K562 (cell line): ENCODE measurements at regions of chr11 and their contacts with region 1.

Region 1: GRCh38 chr11:61187505-61188130 is 15.7 kb upstream of the PGA3 start:
- DNase-seq: peak; percentile 73 to 86 (median 80)
- ATAC-seq: peak; percentile 96
- H3K4me3 ChIP-seq: no peak overlapping the region
- H3K27ac ChIP-seq: no peak overlapping the region
- H3K4me1 ChIP-seq: no peaks in the 10 kb centered on the region; a peak in 1 of 5 replicates
- H3K27me3 ChIP-seq: peaks cover 7 to 9% of the 10 kb centered on the region in 2 experiments; a peak in 3 of 5 replicates
- CTCF ChIP-seq: peak; percentile 92 to 94 (median 94)
- EP300 ChIP-seq: no peak
- POLR2A ChIP-seq: no peak
- RAD21 ChIP-seq: peak; percentile 77 to 88

Region 2: GRCh38 chr11:60775420-60775961 is 412.1 kb before region 1 on chr11:
- CTCF ChIA-PET with region 1: interaction called, 5 read pairs
- POLR2A ChIA-PET with region 1: no interaction called
- in situ Hi-C with region 1: no loop called
- intact Hi-C with region 1: loop called (anchors 1 kb)
- DNase-seq: peak; percentile 75 to 86 (median 78)
- ATAC-seq: peak; percentile 95
- H3K4me3 ChIP-seq: no peak overlapping the region
- H3K27ac ChIP-seq: no peak overlapping the region
- H3K4me1 ChIP-seq: peaks cover 0 to 10% of the 10 kb centered on the region in 2 experiments; a peak in 1 of 5 replicates
- H3K27me3 ChIP-seq: peaks cover 15 to 40% of the 10 kb centered on the region in 2 experiments; a peak in 4 of 5 replicates
- CTCF ChIP-seq: peak; percentile 87 to 94 (median 90)
- EP300 ChIP-seq: no peak
- POLR2A ChIP-seq: no peak
- RAD21 ChIP-seq: peak; percentile 83 to 86

Region 3: DNA sequence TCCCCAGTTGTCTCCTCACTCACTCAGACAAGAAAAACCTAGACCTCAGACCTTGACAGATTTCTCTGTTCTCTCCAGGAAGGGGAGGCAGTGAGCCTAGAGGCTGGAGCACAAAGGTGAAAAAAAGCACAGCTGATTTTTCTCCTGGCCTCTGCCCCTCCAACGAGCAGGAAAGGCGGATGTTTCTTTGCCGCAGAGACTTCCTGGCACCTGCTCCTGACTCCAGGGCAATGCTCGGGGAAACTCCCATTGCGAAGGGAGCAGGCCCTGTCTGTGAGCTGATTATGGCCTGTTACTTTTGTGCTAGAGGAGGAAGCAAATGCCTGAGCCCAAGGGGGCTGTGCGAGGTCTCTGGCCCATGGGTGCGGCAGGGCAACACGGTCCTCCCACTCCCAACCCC is 377.0 kb before region 1 on chr11:
- CTCF ChIA-PET with region 1: no interaction called
- POLR2A ChIA-PET with region 1: no interaction called
- in situ Hi-C with region 1: no loop called
- intact Hi-C with region 1: no loop called
- DNase-seq: no peak
- ATAC-seq: no peak
- H3K4me3 ChIP-seq: no peak overlapping the region
- H3K27ac ChIP-seq: no peak overlapping the region
- H3K4me1 ChIP-seq: no peaks in the 10 kb centered on the region
- H3K27me3 ChIP-seq: peaks cover 34 to 60% of the 10 kb centered on the region in 2 experiments; a peak in 4 of 5 replicates
- CTCF ChIP-seq: no peak
- EP300 ChIP-seq: no peak
- POLR2A ChIP-seq: no peak
- RAD21 ChIP-seq: no peak

Region 4: GRCh38 chr11:60970369-60970774 is 217.2 kb before region 1 on chr11:
- CTCF ChIA-PET with region 1: interaction called, 11 read pairs
- POLR2A ChIA-PET with region 1: interaction called, 3 read pairs
- in situ Hi-C with region 1: no loop called
- intact Hi-C with region 1: no loop called
- DNase-seq: peak; percentile 64 to 70 (median 70)
- ATAC-seq: peak; percentile 97
- H3K4me3 ChIP-seq: no peak overlapping the region
- H3K27ac ChIP-seq: no peak overlapping the region
- H3K4me1 ChIP-seq: peaks cover 0 to 4% of the 10 kb centered on the region in 2 experiments; a peak in 1 of 5 replicates
- H3K27me3 ChIP-seq: peaks cover 24 to 57% of the 10 kb centered on the region in 2 experiments
- CTCF ChIP-seq: peak; percentile 79 to 91 (median 88)
- EP300 ChIP-seq: no peak
- POLR2A ChIP-seq: no peak
- RAD21 ChIP-seq: peak; percentile 73 to 83

Region 5: DNA sequence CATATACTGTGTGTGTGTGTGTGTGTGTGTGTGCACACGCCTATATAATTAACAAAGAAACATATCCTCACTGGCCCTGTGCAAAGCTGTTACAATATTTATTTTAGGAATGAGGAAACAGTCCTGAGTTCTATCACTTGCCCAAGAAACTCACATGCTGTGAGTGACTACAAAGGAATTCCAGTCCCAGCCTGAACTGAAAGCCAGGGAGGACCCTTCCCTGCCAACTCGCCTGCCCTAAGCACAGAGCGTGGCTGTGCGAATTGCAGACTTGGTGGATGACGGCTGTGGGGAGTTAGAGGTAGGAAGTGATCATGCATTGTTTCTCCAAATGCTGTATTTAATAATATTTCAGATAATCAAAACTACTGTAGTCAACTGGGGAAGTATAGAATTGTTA is 111.7 kb before region 1 on chr11:
- CTCF ChIA-PET with region 1: no interaction called
- POLR2A ChIA-PET with region 1: no interaction called
- in situ Hi-C with region 1: no loop called
- intact Hi-C with region 1: loop called (anchors 5 kb)
- DNase-seq: no peak
- ATAC-seq: no peak
- H3K4me3 ChIP-seq: no peak overlapping the region
- H3K27ac ChIP-seq: no peak overlapping the region
- H3K4me1 ChIP-seq: peaks cover 14 to 23% of the 10 kb centered on the region in 2 experiments
- H3K27me3 ChIP-seq: peaks cover 5 to 25% of the 10 kb centered on the region in 2 experiments; a peak in 3 of 5 replicates
- CTCF ChIP-seq: no peak
- EP300 ChIP-seq: no peak
- POLR2A ChIP-seq: no peak
- RAD21 ChIP-seq: no peak

Region 6: DNA sequence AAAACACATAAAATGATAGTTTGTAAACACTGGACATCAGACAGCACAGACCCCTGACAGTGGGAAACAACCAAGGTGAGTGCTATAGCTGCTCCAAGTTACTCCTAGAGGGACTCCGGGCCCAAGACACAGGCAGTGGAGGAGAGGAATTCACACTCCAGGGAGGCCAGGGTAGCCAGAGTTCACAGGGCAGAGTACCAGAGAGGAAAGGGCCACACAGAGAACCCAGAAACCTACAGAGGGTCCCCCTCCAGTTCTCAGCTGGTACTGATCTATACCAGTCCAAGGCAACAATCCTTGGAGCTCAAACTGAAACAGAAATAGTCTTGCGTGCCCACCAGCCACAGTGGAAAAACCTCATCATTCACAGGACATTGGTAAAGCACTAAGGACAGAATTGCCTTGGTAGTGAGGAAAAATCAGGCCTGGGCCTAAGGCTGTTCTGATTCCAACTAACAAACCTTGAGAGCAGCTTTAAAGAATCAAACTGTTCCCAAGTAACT is 34.0 kb before region 1 on chr11:
- CTCF ChIA-PET with region 1: no interaction called
- POLR2A ChIA-PET with region 1: no interaction called
- in situ Hi-C with region 1: no loop called
- intact Hi-C with region 1: no loop called
- DNase-seq: no peak
- ATAC-seq: no peak
- H3K4me3 ChIP-seq: no peak overlapping the region
- H3K27ac ChIP-seq: no peak overlapping the region
- H3K4me1 ChIP-seq: peaks cover 39 to 43% of the 10 kb centered on the region in 2 experiments
- H3K27me3 ChIP-seq: no peaks in the 10 kb centered on the region
- CTCF ChIP-seq: no peak
- EP300 ChIP-seq: no peak
- POLR2A ChIP-seq: no peak
- RAD21 ChIP-seq: no peak

Region 7: GRCh38 chr11:61347916-61348461 is 160.4 kb after region 1 on chr11:
- CTCF ChIA-PET with region 1: no interaction called
- POLR2A ChIA-PET with region 1: no interaction called
- in situ Hi-C with region 1: no loop called
- intact Hi-C with region 1: no loop called
- DNase-seq: no peak
- ATAC-seq: peak; percentile 48
- H3K4me3 ChIP-seq: no peak overlapping the region
- H3K27ac ChIP-seq: no peak overlapping the region; the same call in 2 of the 3 replicates
- H3K4me1 ChIP-seq: peaks cover 29 to 46% of the 10 kb centered on the region in 2 experiments; a peak in 4 of 5 replicates
- H3K27me3 ChIP-seq: no peaks in the 10 kb centered on the region
- CTCF ChIP-seq: no peak
- EP300 ChIP-seq: no peak
- POLR2A ChIP-seq: no peak; the same call in 1 of the 2 replicates
- RAD21 ChIP-seq: no peak